ENCODE measurements at regions of chr4 and their contacts with region 1.

Region 1: DNA sequence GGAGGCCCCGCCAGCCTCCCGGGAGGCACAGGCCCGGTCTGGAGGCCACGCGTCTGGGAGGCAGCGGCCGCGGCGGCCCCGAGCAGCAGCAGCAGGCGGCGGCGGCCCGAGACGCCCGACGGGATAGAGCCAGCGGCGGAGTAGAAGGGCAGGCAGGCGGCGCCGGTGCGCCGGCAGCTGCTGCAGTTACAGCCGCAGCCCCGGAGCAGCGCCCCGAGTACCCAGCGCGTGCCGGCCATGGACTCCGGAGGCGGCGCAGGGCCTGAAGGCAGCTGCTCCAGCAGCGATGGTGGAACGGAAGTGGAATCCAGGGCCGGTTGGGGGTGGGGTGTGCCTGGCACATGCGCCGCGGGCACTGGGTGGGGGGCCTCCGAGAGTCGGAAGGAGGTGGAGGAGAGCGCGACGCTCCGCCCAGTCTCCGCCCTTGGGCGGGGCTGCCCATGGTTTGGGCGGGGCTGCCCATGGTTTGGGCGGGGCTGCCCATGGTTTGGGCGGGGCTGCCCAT is at the start of gene GRSF1:
- DNase-seq: peak; percentile 95
- H3K4me3 Mint-ChIP-seq: peak within 1 kb of the TSS; percentile 85
- H3K27ac Mint-ChIP-seq: peak within 1 kb of the TSS; percentile 90
- H3K4me1 Mint-ChIP-seq: peaks cover 29% of the 10 kb centered on the region
- H3K27me3 Mint-ChIP-seq: no peaks in the 10 kb centered on the region
- total RNA-seq, gene GRSF1: 63.5 to 63.8 TPM

Region 2: DNA sequence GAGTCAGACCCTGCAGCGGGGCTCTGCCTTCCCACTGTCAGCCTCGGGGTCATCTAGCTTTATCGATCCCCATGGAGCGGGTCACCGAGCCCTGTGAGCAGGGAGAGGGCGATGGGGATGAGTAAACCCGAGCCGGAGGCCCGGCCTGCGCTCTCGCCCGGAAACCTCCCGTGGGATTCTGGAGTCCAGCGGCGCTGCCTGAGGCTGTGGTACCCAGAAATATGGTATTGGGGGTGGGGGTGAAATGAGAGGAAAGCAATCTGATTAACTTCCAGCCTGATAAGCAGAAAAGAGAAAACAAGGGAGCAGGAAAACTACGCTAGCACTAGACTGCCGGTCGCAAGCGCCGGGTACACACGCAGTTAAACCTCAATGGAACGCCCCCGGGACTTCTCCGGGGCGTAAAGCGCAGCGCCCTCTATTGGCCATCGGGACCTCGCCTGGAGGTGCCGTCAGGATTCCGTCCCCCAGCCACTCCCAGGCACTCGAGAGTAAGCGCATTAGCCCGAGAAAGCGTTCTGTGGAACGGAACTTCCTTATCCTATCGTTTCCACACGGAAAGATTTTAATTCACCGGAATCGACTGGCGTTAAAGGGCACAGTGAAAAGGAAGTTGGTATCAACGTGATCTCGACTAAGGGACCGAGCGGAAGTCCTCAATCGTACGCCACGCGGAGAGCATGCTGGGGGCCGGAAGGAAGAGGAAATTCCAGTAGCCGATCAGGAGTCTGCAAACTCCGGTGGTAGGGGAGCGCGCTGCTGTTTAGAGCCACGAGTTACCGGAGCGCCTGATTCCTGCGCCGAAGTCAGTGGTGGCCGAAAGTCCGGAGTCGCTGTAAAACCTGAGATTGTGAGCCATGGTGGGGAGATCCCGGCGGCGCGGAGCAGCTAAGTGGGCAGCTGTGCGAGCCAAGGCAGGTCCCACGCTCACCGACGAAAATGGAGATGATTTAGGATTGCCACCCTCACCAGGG is 151.5 kb before region 1 on chr4 and contains the start of gene UTP3:
- CTCF ChIA-PET with region 1: interaction called, 5 read pairs
- POLR2A ChIA-PET with region 1: interaction called, 34 read pairs
- DNase-seq: peak; percentile 92
- H3K4me3 Mint-ChIP-seq: peak within 1 kb of the TSS; percentile 97
- H3K27ac Mint-ChIP-seq: peak within 1 kb of the TSS; percentile 93
- H3K4me1 Mint-ChIP-seq: peaks cover 39% of the 10 kb centered on the region
- H3K27me3 Mint-ChIP-seq: no peaks in the 10 kb centered on the region
- total RNA-seq, gene UTP3: 28.7 to 28.9 TPM

Region 3: GRCh38 chr4:70704331-70705145 is 135.1 kb before region 1 on chr4:
- CTCF ChIA-PET with region 1: interaction called, 3 read pairs
- POLR2A ChIA-PET with region 1: interaction called, 33 read pairs
- DNase-seq: peak; percentile 59
- H3K4me3 Mint-ChIP-seq: peak overlapping the region; percentile 80
- H3K27ac Mint-ChIP-seq: peak overlapping the region; percentile 31
- H3K4me1 Mint-ChIP-seq: peaks cover 22% of the 10 kb centered on the region
- H3K27me3 Mint-ChIP-seq: no peaks in the 10 kb centered on the region

Region 4: GRCh38 chr4:70829492-70829891 is 10.1 kb before region 1 on chr4:
- CTCF ChIA-PET with region 1: interaction called, 4 read pairs
- POLR2A ChIA-PET with region 1: interaction called, 20 read pairs
- DNase-seq: no peak
- H3K4me3 Mint-ChIP-seq: no peak overlapping the region
- H3K27ac Mint-ChIP-seq: no peak overlapping the region
- H3K4me1 Mint-ChIP-seq: peaks cover 9% of the 10 kb centered on the region
- H3K27me3 Mint-ChIP-seq: no peaks in the 10 kb centered on the region

Region 5: GRCh38 chr4:70863099-70863790 is 23.6 kb after region 1 on chr4:
- CTCF ChIA-PET with region 1: no interaction called
- POLR2A ChIA-PET with region 1: no interaction called
- DNase-seq: no peak
- H3K4me3 Mint-ChIP-seq: no peak overlapping the region
- H3K27ac Mint-ChIP-seq: no peak overlapping the region
- H3K4me1 Mint-ChIP-seq: peaks cover 9% of the 10 kb centered on the region
- H3K27me3 Mint-ChIP-seq: no peaks in the 10 kb centered on the region

Region 6: GRCh38 chr4:70901984-70902576 is 62.4 kb after region 1 on chr4 and contains the start of gene MOB1B:
- CTCF ChIA-PET with region 1: interaction called, 8 read pairs
- POLR2A ChIA-PET with region 1: interaction called, 18 read pairs
- DNase-seq: peak; percentile 89
- H3K4me3 Mint-ChIP-seq: peak within 1 kb of the TSS; percentile 95
- H3K27ac Mint-ChIP-seq: peak within 1 kb of the TSS; percentile 80
- H3K4me1 Mint-ChIP-seq: peaks cover 18% of the 10 kb centered on the region
- H3K27me3 Mint-ChIP-seq: no peaks in the 10 kb centered on the region
- total RNA-seq, gene MOB1B: 15.3 to 15.9 TPM

Region 7: DNA sequence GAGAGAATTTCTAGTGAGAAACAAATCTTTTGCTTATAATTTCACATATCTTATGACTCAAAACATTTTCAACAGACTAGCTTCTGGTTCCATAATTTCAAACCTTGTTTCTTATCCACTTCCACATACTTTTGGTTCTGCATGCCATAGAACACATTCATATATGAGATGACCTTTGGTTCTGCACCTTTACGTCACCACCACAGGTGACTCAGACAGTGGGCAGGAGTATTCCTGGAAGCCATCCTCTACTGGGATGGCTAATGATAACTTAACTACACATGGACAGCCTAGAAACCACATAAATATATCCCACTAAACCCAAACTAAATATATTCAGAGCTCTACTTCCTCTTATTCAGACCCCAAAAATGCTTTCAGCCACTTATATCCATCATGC is 287.1 kb after region 1 on chr4:
- CTCF ChIA-PET with region 1: no interaction called
- POLR2A ChIA-PET with region 1: no interaction called
- DNase-seq: no peak
- H3K4me3 Mint-ChIP-seq: no peak overlapping the region
- H3K27ac Mint-ChIP-seq: no peak overlapping the region
- H3K4me1 Mint-ChIP-seq: no peaks in the 10 kb centered on the region
- H3K27me3 Mint-ChIP-seq: no peaks in the 10 kb centered on the region

Measured in activated CD4-positive, alpha-beta memory T cell treated with anti-CD3 and anti-CD28 coated beads, Interleukin-2, amount 10 ng/mL, durations not matched to agents 7 days and 5 days (primary cell).